ENCODE measurements at regions of chr17 and their contacts with region 1.

Region 1: DNA sequence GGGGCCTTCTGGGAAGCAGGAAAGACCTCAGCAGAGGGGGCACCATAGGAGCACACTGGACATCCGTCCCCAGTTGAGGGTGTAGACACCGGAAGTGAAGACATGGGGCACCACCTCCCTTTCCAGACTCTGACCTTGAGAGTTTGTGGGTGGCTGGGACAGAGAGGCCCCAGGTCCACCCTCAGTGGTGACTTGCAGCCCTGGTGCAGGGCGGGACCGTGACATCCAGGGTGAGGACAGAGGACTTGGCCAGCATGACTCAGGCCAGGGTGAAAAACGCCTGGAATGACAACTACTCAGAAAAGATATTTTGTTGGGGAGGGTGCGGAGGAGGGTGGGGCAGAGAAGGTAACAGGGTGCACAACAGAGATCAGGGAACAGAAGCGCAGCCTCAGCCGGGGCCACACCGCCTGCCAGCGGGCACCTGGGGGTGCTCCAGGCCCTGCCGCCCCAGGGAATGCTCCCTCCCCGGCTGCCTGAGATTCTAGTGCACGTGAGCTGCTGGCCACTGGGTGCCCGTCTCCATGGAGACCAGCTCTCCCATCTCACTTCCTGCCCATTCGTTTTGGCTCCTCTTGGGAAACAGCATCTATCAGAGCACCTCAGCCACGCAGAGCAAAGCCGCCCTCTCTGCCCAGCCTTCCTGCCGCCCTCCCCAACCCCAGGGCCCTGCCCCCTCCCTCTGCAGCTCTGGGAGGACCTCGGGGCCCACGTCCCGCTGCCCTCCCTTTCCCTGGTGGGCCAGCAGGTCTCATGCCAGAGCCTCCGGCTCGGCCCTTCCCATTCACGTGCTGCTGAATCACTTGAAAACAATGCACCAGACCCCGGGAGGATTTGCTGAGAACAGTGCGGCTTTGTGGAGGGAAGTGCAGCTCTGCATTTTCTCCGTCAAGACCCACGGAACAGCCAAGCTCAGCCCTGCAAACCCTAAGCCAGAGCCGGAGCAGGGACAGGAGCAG is 19.6 kb downstream of the CEP295NL start:
- DNase-seq: peak; percentile 91

Region 2: GRCh38 chr17:78933025-78933958 is 49.8 kb after region 1 on chr17:
- intact Hi-C with region 1: loop called (anchors 5 kb)
- DNase-seq: no peak

Measured in cardiac septum (tissue), 1 donor.